Activated CD4-positive, alpha-beta memory T cell treated with anti-CD3 and anti-CD28 coated beads, Interleukin-2, amount 10 ng/mL, durations not matched to agents 7 days and 5 days (primary cell): ENCODE measurements at regions of chr20 and their contacts with region 1.

Region 1: DNA sequence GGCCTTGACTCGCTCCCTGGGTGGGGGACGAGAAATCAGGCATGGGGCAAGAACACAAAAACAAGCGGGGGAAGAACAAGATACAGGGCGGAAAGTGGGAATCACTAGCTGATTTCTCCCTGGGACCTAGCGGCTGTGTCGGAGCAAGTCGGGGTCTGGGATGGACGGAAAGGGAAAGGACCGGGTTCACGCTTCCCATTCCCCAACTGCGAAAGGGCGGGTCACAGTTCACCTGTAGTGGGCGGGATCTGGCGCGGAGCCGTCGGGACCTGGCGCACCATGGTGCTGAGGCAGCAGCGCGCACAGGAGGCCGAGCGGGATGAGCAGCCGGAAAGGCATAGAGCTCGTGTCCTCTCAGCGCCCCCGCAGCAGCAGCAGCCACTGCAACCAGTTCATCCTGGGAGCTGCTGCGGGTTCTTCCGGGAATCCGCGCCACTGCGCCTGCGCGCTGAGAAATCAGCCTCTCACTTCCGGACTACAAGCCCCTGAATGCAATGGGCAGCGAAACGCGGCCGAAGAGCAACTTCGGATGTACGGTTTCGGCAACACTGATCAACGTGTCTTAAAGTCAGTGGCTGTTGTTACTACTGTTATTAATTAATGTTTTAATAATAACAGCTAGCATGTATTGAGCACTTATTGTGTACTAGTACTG is at the start of gene EDEM2:
- DNase-seq: peak; percentile 95
- H3K4me3 Mint-ChIP-seq: peak within 1 kb of the TSS; percentile 99
- H3K27ac Mint-ChIP-seq: peak within 1 kb of the TSS; percentile 91
- H3K4me1 Mint-ChIP-seq: peaks cover 33% of the 10 kb centered on the region
- H3K27me3 Mint-ChIP-seq: no peaks in the 10 kb centered on the region
- total RNA-seq, gene EDEM2: 29.7 to 30.5 TPM

Region 2: GRCh38 chr20:35092524-35093266 is 54.4 kb before region 1 on chr20 and contains the start of gene TRPC4AP:
- CTCF ChIA-PET with region 1: interaction called, 17 read pairs
- POLR2A ChIA-PET with region 1: interaction called, 9 read pairs
- DNase-seq: peak; percentile 91
- H3K4me3 Mint-ChIP-seq: peak within 1 kb of the TSS; percentile 85
- H3K27ac Mint-ChIP-seq: peak within 1 kb of the TSS; percentile 85
- H3K4me1 Mint-ChIP-seq: peaks cover 55% of the 10 kb centered on the region
- H3K27me3 Mint-ChIP-seq: no peaks in the 10 kb centered on the region
- total RNA-seq, gene TRPC4AP: 63.5 to 65.7 TPM

Region 3: DNA sequence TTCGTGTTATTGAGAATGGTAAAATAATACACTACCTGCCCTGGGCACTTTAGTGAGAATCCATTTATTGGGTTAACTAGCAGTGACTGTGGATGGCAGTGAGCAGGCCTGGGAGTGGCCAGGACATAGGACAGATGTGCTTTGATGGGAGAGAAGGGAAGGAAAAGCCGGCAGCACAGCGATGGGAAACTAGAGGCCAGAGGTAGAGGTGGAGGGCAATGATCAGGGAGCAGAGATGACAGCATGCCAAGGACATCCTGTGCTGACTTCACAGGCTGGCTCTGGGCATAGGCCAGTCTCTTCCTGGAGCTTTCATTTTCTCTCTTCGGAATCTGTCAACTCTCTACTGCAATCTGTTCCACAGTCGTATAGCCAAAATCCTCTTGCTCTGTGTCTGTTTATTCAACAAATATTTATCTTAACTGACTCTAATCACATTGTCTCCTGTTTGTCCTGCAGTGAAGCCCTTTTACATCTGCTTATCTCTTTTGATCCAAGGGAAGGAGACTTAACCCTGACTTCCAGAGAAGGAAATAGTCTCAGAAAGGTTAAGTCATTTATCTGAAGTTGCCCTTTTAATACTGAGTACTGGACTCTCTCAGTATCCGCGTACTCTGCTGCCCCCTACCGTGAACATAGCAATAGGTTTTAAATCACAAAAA is 61.0 kb after region 1 on chr20:
- CTCF ChIA-PET with region 1: interaction called, 83 read pairs
- POLR2A ChIA-PET with region 1: interaction called, 3 read pairs
- DNase-seq: peak; percentile 82
- H3K4me3 Mint-ChIP-seq: no peak overlapping the region
- H3K27ac Mint-ChIP-seq: no peak overlapping the region
- H3K4me1 Mint-ChIP-seq: no peaks in the 10 kb centered on the region
- H3K27me3 Mint-ChIP-seq: no peaks in the 10 kb centered on the region

Region 4: GRCh38 chr20:35277531-35278395 is 130.7 kb after region 1 on chr20 and contains the start of gene MMP24OS:
- CTCF ChIA-PET with region 1: interaction called, 3 read pairs
- POLR2A ChIA-PET with region 1: interaction called, 12 read pairs
- DNase-seq: peak; percentile 93
- H3K4me3 Mint-ChIP-seq: peak within 1 kb of the TSS; percentile 99
- H3K27ac Mint-ChIP-seq: peak within 1 kb of the TSS; percentile 99
- H3K4me1 Mint-ChIP-seq: peaks cover 35% of the 10 kb centered on the region
- H3K27me3 Mint-ChIP-seq: no peaks in the 10 kb centered on the region
- total RNA-seq, gene MMP24OS: 45.6 to 48.7 TPM